Activated B cell treated with CpG ODN at 0.5 μM for 24 hours (primary cell): ENCODE measurements at regions of chr4 and their contacts with region 1.

Region 1: DNA sequence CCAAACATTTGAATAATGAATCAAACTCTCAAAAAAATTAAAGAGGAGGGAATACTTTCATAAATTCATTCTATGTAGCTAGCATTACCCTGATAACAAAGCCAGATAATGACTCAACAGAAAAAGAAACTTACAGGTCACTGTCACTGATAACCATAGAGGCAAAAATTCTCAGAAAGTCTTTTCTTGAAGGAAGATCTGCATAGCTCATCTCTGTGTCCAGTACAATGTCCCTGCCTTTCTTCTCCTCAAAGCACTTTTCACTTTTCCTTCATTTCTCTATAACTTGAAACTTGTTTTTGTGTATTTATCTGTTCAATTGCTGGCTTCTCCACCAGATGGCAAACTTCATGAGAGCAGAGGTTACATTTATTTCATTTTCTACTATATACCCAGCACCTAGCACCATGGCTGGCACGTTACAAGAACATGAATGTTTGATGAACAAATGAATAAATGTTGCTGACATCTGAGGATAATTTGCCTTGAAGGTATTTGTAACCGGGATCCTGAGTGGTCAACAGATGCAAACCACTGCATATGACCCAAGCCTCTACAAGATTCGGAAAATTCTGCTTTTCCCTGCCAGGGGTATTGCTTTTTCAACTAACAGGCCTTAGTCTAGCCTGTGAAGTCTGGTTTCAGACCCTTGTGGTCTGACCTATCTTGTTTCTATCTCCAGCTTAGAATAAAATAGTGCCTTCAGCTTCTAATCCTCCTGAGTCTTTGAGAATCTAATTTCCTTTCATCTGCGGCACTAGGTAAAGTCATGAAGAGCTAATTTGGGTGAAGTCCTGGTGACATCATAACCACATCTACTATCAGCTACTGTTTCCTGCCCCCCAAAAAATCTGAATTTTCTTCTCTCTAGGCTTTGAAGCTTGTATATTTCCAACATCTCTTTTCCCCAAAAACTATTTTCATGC is 52.5 kb upstream of the ANTXR2 start:
- DNase-seq: no peak
- ATAC-seq: peak; percentile 84
- H3K4me3 Mint-ChIP-seq: no peak overlapping the region
- H3K27ac Mint-ChIP-seq: no peak overlapping the region
- H3K4me1 Mint-ChIP-seq: peaks cover 23% of the 10 kb centered on the region
- H3K27me3 Mint-ChIP-seq: no peaks in the 10 kb centered on the region
- CTCF ChIP-seq: no peak

Region 2: DNA sequence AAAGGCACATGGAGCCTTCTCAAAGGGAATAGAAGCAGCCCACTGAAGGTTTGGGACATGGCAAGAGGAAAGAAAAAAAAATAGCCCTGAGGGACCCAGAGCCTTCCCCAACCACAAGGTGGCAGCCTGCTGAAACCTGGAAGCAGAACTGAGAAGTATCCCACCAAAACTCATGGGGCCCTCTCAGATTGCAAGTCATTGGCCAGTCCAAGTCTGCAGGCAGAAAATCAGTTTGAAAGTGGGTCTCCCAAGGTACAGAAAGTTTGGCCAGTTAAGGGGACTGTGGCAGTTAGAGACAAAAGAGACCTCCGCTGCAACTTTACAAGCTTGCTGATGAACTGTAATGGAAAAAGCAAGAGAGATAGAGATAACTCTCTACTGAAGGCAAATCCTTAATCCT is 208.3 kb before region 1 on chr4:
- CTCF ChIA-PET with region 1: interaction called, 6 read pairs
- POLR2A ChIA-PET with region 1: no interaction called
- intact Hi-C with region 1: loop called (anchors 2 kb)
- DNase-seq: peak; percentile 25
- ATAC-seq: peak; percentile 68
- H3K4me3 Mint-ChIP-seq: no peak overlapping the region
- H3K27ac Mint-ChIP-seq: no peak overlapping the region
- H3K4me1 Mint-ChIP-seq: peaks cover 4% of the 10 kb centered on the region
- H3K27me3 Mint-ChIP-seq: no peaks in the 10 kb centered on the region
- CTCF ChIP-seq: no peak

Region 3: DNA sequence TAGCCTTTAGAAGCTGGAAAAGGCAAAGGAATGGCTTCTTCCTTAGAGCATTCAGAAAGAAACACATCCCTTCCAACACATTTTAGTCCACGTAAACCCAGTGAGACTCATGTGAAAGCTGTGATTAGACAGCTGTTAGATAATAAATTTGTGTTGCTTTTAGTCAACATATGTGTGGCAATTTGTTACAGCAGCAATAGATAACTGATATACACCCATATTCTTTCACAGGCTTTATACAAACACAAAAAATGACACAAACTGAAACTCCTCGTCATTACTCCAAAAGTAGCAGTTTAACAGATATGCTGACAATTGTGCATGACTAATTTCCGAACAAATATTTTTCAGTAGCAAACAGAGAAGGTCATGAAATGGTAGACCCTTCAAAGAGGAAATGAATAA is 117.8 kb before region 1 on chr4:
- CTCF ChIA-PET with region 1: no interaction called
- POLR2A ChIA-PET with region 1: no interaction called
- intact Hi-C with region 1: no loop called
- DNase-seq: no peak
- ATAC-seq: peak; percentile 31
- H3K4me3 Mint-ChIP-seq: no peak overlapping the region
- H3K27ac Mint-ChIP-seq: no peak overlapping the region
- H3K4me1 Mint-ChIP-seq: peaks cover 20% of the 10 kb centered on the region
- H3K27me3 Mint-ChIP-seq: no peaks in the 10 kb centered on the region
- CTCF ChIP-seq: no peak

Region 4: GRCh38 chr4:80072744-80073472 is 52.6 kb before region 1 on chr4 and contains the start of gene ANTXR2:
- CTCF ChIA-PET with region 1: interaction called, 7 read pairs
- POLR2A ChIA-PET with region 1: interaction called, 3 read pairs
- intact Hi-C with region 1: loop called (anchors 2 kb)
- DNase-seq: peak; percentile 73
- ATAC-seq: peak; percentile 78
- H3K4me3 Mint-ChIP-seq: peak within 1 kb of the TSS; percentile 94
- H3K27ac Mint-ChIP-seq: peak within 1 kb of the TSS; percentile 97
- H3K4me1 Mint-ChIP-seq: peaks cover 56% of the 10 kb centered on the region
- H3K27me3 Mint-ChIP-seq: no peaks in the 10 kb centered on the region
- CTCF ChIP-seq: no peak
- total RNA-seq, gene ANTXR2: 14.2 and 19.6 TPM in 2 replicates

Region 5: DNA sequence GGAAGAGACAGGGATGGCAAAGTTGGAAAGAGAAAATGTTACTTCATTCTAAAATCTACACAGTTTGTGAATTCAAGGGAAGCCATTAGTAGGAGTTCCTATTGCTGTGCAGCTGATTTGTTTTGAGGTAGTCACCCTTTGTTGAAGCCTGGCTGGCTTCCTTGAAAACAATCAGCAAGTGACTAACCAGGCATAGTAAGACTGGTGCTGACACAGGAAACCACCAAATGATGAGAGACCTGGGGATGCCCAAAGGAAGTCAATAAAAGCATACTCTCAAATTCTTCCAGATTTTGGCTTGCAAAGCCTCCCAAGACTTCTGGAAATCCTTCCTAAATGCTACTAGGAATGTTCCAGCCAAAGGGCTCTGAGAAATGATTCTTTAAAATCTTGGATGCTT is 47.9 kb after region 1 on chr4:
- CTCF ChIA-PET with region 1: interaction called, 29 read pairs
- POLR2A ChIA-PET with region 1: interaction called, 5 read pairs
- intact Hi-C with region 1: loop called (anchors 2 kb)
- DNase-seq: no peak
- ATAC-seq: peak; percentile 91
- H3K4me3 Mint-ChIP-seq: peak overlapping the region; percentile 70
- H3K27ac Mint-ChIP-seq: peak overlapping the region; percentile 96
- H3K4me1 Mint-ChIP-seq: peaks cover 62% of the 10 kb centered on the region
- H3K27me3 Mint-ChIP-seq: no peaks in the 10 kb centered on the region
- CTCF ChIP-seq: no peak

Region 6: GRCh38 chr4:80202190-80202711 is 76.7 kb after region 1 on chr4:
- CTCF ChIA-PET with region 1: interaction called, 30 read pairs
- POLR2A ChIA-PET with region 1: interaction called, 14 read pairs
- intact Hi-C with region 1: loop called (anchors 1 kb)
- DNase-seq: peak; percentile 84
- ATAC-seq: peak; percentile 68
- H3K4me3 Mint-ChIP-seq: peak overlapping the region; percentile 79
- H3K27ac Mint-ChIP-seq: peak overlapping the region; percentile 81
- H3K4me1 Mint-ChIP-seq: peaks cover 23% of the 10 kb centered on the region
- H3K27me3 Mint-ChIP-seq: peaks cover 4% of the 10 kb centered on the region
- CTCF ChIP-seq: no peak